ENCODE measurements at regions of chr3 and their contacts with region 1.

Region 1: GRCh38 chr3:73045391-73045790 is 16.1 kb upstream of the EBLN2 start:
- DNase-seq: no peak
- H3K4me3 ChIP-seq: no peak overlapping the region
- H3K27ac ChIP-seq: no peak overlapping the region
- H3K4me1 ChIP-seq: peaks cover 0 to 10% of the 10 kb centered on the region in 2 donors
- H3K27me3 ChIP-seq: no peaks in the 10 kb centered on the region
- CTCF ChIP-seq: no peak
- POLR2A ChIP-seq: no peak

Region 2: GRCh38 chr3:72999951-73000350 is 45.4 kb before region 1 on chr3:
- intact Hi-C with region 1: loop called (anchors 2 kb)
- DNase-seq: no peak
- H3K4me3 ChIP-seq: peak overlapping the region in 1 of 3 donors; percentile 79
- H3K27ac ChIP-seq: no peak overlapping the region
- H3K4me1 ChIP-seq: no peaks in the 10 kb centered on the region
- H3K27me3 ChIP-seq: no peaks in the 10 kb centered on the region
- CTCF ChIP-seq: no peak
- POLR2A ChIP-seq: no peak

Region 3: DNA sequence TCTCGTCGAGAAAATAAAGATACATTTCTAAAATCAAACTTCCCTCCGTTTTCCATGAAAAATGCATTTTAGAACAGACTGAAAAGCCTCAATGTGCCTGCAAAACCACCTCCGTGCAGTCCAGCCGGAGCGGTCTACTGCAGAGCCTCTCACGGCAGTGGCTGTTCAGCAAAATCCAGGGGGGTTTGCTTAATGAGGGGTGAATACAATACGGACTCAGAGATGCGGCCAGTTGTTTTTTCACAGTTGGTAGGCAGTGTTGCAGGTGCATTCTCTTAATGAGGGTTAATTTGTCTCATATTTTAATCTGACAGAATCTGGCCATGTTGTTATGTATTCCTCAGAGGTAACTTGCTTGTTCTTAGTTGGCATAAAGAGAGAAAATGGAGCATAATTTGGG is 239.1 kb after region 1 on chr3:
- intact Hi-C with region 1: no loop called
- DNase-seq: no peak
- H3K4me3 ChIP-seq: no peak overlapping the region
- H3K27ac ChIP-seq: no peak overlapping the region
- H3K4me1 ChIP-seq: no peaks in the 10 kb centered on the region
- H3K27me3 ChIP-seq: no peaks in the 10 kb centered on the region
- CTCF ChIP-seq: no peak
- POLR2A ChIP-seq: no peak